A673 (cell line): ENCODE measurements at regions of chr14 and their contacts with region 1.

Region 1: DNA sequence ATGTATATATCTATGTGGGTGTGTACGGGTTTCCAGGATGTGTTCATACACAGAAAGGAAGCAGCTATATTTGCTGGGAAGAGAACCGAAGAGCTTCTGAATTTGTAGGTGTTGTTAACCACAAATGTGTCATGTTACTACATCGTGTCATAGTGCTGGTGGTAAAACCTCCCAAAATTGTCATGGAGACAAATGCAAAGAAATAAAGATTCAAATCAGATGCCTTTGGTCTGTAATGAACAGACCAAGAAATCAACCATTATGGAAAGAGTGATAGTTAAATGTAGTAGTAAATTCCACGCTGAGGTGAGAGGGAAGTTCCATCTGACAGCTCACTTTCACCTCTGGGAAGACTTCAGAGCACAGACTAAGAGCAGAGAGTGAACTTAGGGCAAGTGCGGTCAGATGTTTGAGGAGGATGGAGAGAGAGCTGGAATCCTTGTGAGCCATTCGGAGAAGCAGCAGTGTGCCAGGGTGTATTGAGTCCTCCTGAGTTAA is 487.5 kb downstream of the TMEM121 start:
- DNase-seq: no peak
- H3K4me3 ChIP-seq: no peak overlapping the region
- H3K27ac ChIP-seq: no peak overlapping the region
- H3K4me1 ChIP-seq: no peaks in the 10 kb centered on the region
- H3K27me3 ChIP-seq: peaks cover 8% of the 10 kb centered on the region
- CTCF ChIP-seq: no peak

Region 2: GRCh38 chr14:105549481-105549880 is 464.4 kb before region 1 on chr14:
- CTCF ChIA-PET with region 1: no interaction called
- POLR2A ChIA-PET with region 1: no interaction called
- intact Hi-C with region 1: loop called (anchors 10 kb)
- DNase-seq: no peak
- H3K4me3 ChIP-seq: no peak overlapping the region
- H3K27ac ChIP-seq: no peak overlapping the region
- H3K4me1 ChIP-seq: no peaks in the 10 kb centered on the region
- H3K27me3 ChIP-seq: no peaks in the 10 kb centered on the region
- CTCF ChIP-seq: no peak

Region 3: GRCh38 chr14:105980224-105980623 is 33.7 kb before region 1 on chr14:
- CTCF ChIA-PET with region 1: no interaction called
- POLR2A ChIA-PET with region 1: no interaction called
- intact Hi-C with region 1: no loop called
- DNase-seq: peak; percentile 51
- H3K4me3 ChIP-seq: no peak overlapping the region
- H3K27ac ChIP-seq: no peak overlapping the region
- H3K4me1 ChIP-seq: no peaks in the 10 kb centered on the region
- H3K27me3 ChIP-seq: no peaks in the 10 kb centered on the region
- CTCF ChIP-seq: no peak

Region 4: GRCh38 chr14:106417224-106418049 is 403.5 kb after region 1 on chr14:
- CTCF ChIA-PET with region 1: interaction called, 15 read pairs
- POLR2A ChIA-PET with region 1: no interaction called
- intact Hi-C with region 1: no loop called
- DNase-seq: peak; percentile 75
- H3K4me3 ChIP-seq: no peak overlapping the region
- H3K27ac ChIP-seq: no peak overlapping the region
- H3K4me1 ChIP-seq: peaks cover 3% of the 10 kb centered on the region
- H3K27me3 ChIP-seq: no peaks in the 10 kb centered on the region
- CTCF ChIP-seq: peak; percentile 98